ENCODE measurements at regions of chr7 and their contacts with region 1.

Region 1: GRCh38 chr7:132580717-132581285 is 4.5 kb upstream of the PLXNA4 start:
- DNase-seq: peak; percentile 73 to 78 (median 78)
- ATAC-seq: peak; percentile 54 to 70
- H3K4me3 ChIP-seq: no peak overlapping the region
- H3K27ac ChIP-seq: no peak overlapping the region
- H3K4me1 ChIP-seq: no peaks in the 10 kb centered on the region
- H3K27me3 ChIP-seq: no peaks in the 10 kb centered on the region

Region 2: DNA sequence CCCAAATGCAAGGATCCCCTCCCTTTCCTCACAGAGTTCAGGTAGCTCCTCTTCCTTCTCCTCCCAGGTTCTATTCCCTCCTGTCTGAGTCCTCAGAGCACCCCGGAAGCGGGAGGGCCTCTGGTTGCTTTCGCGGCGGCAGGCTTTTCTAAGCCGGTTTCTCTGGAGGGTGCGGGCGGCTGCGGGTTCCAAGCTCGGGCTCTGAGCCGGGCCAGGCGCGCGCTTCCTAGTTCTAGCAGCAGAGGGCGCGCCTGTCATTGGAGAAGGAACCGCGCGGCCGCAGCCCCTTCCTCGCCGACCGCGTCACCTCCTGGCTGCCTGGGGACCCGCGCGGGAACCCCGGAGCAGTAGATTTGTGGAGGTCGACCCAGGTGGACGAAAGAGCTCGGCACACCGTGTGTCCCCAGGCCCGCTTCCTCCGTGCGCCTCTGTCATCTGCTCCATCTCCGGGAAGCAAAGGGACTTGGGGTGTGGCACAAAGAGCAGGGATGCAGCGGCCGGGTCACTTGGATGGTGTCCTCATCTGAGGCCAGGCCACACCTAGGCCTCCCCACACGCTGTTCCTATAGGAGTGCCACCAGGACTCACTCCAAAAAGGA is 635.4 kb before region 1 on chr7:
- intact Hi-C with region 1: loop called (anchors 5 to 10 kb)
- DNase-seq: peak; percentile 59 to 79 (median 77)
- ATAC-seq: peak; percentile 59 to 64
- H3K4me3 ChIP-seq: no peak overlapping the region
- H3K27ac ChIP-seq: no peak overlapping the region
- H3K4me1 ChIP-seq: peaks cover 2% of the 10 kb centered on the region
- H3K27me3 ChIP-seq: no peaks in the 10 kb centered on the region

Region 3: DNA sequence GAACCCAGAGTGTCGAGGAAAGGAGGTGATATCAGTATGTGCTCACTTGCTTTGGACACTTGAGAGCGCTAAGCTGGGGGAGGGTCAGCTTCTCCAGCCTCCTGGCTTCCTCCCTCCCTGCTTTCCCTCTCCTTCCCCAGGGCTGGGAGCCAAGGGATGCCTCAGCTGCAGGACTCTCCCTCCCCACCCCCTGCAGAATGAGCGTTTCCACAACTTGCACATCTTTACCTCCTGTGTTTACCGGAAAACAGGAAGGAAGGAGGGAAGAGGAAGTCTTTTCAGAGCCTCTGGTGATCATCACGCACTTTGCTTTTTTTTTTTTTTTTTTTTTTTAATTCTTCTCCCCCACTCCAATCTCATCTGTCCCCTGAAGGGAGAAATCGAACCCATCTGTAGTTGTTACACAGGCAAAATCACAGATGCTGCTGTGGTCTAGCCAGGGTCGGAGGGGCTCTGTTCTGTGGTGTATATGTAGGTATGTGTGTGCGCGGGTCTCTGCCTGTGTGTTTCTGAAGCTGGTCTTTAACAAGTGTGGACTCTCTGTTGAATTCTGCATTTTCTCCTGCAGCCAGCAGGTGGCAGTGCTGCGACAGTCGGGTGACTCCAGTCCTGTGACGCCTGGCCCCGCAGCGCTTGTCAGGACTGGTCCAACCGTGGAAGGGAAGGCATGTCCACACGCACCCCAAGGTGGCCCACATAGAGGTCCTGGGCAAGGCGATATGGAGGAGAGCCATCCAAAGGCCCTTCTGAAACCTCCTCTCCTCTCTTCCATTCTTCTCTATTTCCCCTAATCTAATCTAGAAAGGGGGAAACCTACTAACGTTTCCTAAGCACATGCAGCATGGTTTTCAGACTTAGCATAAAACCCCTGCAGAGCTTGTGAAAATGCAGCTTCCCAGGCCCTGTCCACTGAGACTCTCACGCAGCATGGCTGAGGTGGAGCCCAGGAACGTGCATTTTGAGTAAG is 262.2 kb before region 1 on chr7:
- intact Hi-C with region 1: loop called (anchors 5 kb)
- DNase-seq: peak; percentile 87 to 93 (median 93)
- ATAC-seq: peak; percentile 89 to 90
- H3K4me3 ChIP-seq: no peak overlapping the region
- H3K27ac ChIP-seq: no peak overlapping the region
- H3K4me1 ChIP-seq: no peaks in the 10 kb centered on the region
- H3K27me3 ChIP-seq: no peaks in the 10 kb centered on the region

Region 4: DNA sequence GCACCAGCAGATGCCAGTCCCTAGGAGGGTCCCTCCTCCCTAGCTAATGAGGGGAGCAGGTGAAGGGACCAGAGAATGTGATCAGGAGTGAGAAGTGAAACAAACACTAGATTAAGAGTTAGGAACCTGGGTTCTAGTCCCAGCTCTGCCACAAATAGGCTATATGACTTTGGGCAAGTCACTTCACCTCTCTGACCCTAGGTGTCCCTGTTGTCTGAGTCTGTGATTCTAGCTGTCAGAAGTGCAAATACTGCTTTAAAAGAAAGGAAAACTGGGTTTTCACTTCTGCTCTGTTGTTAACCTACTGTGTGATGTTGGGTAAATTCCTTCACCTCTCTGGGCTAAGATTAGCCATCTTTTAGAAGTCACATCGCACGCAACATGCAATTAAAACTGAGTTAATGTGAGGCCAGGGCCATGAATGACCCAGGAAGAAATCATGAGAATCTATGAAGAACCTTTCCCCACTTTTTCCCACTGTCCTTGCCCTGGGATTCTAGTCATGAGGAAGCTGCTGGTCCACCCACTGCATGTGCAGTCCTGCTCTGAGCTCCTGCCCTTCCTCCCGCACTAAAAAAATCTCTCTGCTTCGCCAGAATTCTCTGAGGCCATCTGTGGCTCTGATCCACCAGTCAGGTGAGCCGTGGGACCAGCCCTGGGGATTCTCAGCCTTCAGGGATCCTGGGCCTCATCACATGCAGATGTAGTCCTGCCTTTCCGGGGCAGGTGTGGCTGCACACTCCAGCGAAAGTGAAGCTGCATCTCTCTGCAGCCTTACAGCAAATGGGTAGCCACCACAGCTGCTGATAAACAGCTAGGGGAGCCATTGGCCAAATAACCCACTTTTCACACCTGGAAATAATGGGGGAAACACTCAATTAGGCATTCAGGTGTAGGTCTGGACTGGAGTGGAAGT is 186.3 kb before region 1 on chr7:
- intact Hi-C with region 1: loop called in 1 of 4 experiments (anchors 10 kb)
- DNase-seq: no peak
- ATAC-seq: peak; percentile 15 to 24
- H3K4me3 ChIP-seq: no peak overlapping the region
- H3K27ac ChIP-seq: no peak overlapping the region
- H3K4me1 ChIP-seq: peaks cover 22% of the 10 kb centered on the region
- H3K27me3 ChIP-seq: no peaks in the 10 kb centered on the region

Region 5: DNA sequence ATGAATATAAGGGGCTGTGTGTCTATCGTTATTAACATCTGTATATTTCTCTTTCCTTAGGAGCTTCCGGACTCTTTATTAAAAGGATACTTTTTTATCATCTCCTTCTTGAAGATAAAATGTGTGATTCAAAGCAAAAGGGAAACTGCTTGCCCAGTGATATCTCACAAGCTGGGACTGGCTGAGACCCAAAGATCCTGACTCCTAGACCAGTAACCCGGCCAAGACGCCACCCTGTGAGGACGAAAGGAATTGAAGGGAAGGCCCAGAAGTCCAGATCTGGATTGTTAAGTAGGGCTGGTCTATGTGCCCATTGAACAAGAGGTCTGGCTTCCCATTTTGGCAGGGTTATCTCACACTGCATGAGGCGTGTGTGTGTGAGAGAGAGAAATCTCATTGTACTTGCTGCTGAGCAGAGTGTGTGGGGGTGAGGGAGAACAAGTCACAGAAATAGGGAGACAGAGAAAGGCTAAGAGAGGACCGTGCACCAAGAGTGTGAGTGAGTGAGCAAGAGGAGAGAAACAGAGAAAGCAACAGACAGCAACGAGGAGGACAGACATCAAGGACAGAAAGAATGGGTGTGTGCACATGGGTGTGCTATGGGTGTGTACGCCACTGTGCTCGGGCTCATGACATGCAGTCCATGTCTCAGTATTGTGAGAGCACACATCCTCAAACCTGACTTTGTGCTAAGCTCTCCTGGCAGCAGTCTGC is 79.9 kb before region 1 on chr7:
- intact Hi-C with region 1: loop called in 1 of 4 experiments (anchors 10 kb)
- DNase-seq: peak; percentile 86 to 92 (median 86)
- ATAC-seq: peak; percentile 87 to 90
- H3K4me3 ChIP-seq: no peak overlapping the region
- H3K27ac ChIP-seq: peak overlapping the region; percentile 38
- H3K4me1 ChIP-seq: peaks cover 14% of the 10 kb centered on the region
- H3K27me3 ChIP-seq: no peaks in the 10 kb centered on the region